HepG2 (cell line): ENCODE measurements at regions of chr14 and their contacts with region 1.

Region 1: GRCh38 chr14:31945074-31945613 is 132.0 kb upstream of the ARHGAP5 start:
- DNase-seq: peak; percentile 60
- ATAC-seq: peak; percentile 29
- H3K4me3 ChIP-seq: peak overlapping the region; percentile 41 to 62 (median 44)
- H3K27ac ChIP-seq: peak overlapping the region; percentile 27
- H3K4me1 ChIP-seq: peaks cover 64% of the 10 kb centered on the region
- H3K27me3 ChIP-seq: no peaks in the 10 kb centered on the region
- CTCF ChIP-seq: no peak
- EP300 ChIP-seq: no peak; a peak in 1 of 4 replicates
- POLR2A ChIP-seq: no peak
- RAD21 ChIP-seq: no peak

Region 2: GRCh38 chr14:31930070-31930469 is 15.1 kb before region 1 on chr14:
- CTCF ChIA-PET with region 1: no interaction called
- POLR2A ChIA-PET with region 1: no interaction called
- in situ Hi-C with region 1: no loop called
- intact Hi-C with region 1: no loop called
- DNase-seq: no peak
- ATAC-seq: no peak
- H3K4me3 ChIP-seq: no peak overlapping the region
- H3K27ac ChIP-seq: no peak overlapping the region
- H3K4me1 ChIP-seq: peaks cover 19% of the 10 kb centered on the region
- H3K27me3 ChIP-seq: no peaks in the 10 kb centered on the region
- CTCF ChIP-seq: no peak
- EP300 ChIP-seq: no peak
- POLR2A ChIP-seq: no peak
- RAD21 ChIP-seq: no peak

Region 3: DNA sequence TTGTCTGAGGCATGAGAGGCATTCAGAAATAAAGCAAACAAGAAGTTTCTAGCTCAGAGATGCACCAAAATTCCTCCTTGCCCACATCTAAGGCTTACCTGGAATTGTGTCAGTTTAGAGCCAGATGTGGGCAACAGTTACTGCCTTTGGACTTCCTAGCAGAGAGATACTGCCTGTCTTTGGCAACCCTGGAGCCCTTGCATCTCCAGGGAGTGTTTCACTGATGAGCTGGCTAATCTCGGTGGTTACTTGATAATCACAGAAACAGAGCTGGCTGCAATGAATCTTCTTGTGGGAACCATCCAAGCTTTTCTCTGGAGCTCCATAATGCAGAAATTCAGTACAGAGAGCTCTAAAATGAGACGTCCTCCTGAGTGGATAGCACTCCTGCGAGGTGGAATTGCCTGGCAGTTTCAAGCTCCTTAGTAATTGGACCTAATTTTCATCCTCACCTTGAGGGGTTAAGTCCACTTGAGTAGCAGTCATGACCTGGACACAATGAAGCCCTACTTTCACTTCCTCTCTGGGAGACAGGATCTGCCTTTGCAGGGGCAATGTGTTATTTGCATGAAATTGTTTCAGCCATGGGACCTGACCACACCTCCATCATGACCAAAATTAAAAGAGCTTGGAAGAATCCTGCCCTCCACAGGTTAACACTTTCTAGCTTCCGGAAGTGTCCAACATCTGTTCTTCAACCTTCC is 23.1 kb after region 1 on chr14:
- CTCF ChIA-PET with region 1: no interaction called
- POLR2A ChIA-PET with region 1: interaction called, 6 read pairs
- in situ Hi-C with region 1: no loop called
- intact Hi-C with region 1: loop called (anchors 1 kb)
- DNase-seq: peak; percentile 86
- ATAC-seq: peak; percentile 10
- H3K4me3 ChIP-seq: peak overlapping the region in 1 of 3 experiments; percentile 20; a peak in 1 of 6 replicates
- H3K27ac ChIP-seq: no peak overlapping the region
- H3K4me1 ChIP-seq: peaks cover 53% of the 10 kb centered on the region
- H3K27me3 ChIP-seq: no peaks in the 10 kb centered on the region
- CTCF ChIP-seq: no peak
- EP300 ChIP-seq: peak in 1 of 2 experiments; percentile 43; a peak in 2 of 4 replicates
- POLR2A ChIP-seq: no peak
- RAD21 ChIP-seq: no peak